Right ventricle myocardium inferior (tissue), 1 donor: ENCODE measurements at regions of chr15 and their contacts with region 1.

Region 1: GRCh38 chr15:93087825-93088199 is 1.2 kb downstream of the RGMA start:
- DNase-seq: no peak
- ATAC-seq: peak; percentile 64

Region 2: DNA sequence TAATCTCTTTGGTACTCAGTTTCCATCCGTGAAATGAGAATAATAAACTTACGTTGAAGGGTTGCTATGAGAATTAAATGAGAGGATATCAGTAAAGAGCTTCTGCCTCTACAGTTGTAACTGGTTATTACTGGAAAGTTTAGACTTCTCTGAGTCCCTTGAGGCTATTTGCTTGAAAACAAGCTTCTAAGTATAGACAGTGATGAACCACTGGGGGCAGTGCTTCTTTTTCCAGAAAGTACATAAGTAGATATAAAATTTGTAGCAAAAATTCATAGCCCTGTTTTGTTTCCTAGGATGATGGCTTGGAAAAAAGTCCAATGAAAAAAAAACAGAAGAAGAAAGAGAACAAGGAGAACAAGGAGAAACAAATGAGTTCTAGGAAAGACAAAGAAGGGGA is 85.9 kb before region 1 on chr15:
- intact Hi-C with region 1: no loop called
- DNase-seq: no peak
- ATAC-seq: no peak

Region 3: DNA sequence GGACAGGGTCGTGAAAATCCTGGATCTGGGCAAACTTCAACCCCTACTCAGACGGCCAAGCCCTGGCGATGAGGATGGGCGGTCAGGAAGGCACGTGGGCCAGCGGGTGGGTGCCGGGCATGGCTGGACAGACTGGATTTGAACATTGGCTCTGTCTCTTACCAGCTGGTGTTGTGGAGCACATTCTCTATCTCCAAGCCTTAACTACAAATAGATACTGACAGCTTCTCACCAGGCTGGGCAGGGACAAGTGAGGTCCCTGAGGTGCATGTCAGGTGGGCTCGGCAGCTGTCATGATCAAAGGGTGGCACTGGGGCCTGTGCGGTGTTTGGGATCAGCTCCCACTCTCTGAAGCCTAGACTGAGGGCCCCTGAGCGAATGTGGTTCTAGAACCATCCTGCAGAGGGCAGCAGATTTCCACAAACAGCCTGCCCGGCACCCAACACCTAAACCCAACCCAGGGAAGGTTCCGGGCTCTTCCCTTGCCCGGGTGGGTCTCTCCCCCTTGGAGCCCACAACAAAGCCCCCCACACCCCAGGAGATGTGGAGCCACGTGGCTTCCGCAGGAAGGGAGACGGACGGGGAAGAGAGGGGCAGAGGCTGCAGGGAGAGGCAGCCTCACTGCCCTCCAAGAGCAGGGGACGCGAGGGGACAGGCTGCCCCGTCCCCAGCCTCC is 57.2 kb before region 1 on chr15:
- intact Hi-C with region 1: loop called (anchors 5 kb)
- DNase-seq: no peak
- ATAC-seq: peak; percentile 70

Region 4: GRCh38 chr15:93217343-93217742 is 129.5 kb after region 1 on chr15:
- intact Hi-C with region 1: loop called (anchors 2 kb)
- DNase-seq: no peak
- ATAC-seq: peak; percentile 78

Region 5: DNA sequence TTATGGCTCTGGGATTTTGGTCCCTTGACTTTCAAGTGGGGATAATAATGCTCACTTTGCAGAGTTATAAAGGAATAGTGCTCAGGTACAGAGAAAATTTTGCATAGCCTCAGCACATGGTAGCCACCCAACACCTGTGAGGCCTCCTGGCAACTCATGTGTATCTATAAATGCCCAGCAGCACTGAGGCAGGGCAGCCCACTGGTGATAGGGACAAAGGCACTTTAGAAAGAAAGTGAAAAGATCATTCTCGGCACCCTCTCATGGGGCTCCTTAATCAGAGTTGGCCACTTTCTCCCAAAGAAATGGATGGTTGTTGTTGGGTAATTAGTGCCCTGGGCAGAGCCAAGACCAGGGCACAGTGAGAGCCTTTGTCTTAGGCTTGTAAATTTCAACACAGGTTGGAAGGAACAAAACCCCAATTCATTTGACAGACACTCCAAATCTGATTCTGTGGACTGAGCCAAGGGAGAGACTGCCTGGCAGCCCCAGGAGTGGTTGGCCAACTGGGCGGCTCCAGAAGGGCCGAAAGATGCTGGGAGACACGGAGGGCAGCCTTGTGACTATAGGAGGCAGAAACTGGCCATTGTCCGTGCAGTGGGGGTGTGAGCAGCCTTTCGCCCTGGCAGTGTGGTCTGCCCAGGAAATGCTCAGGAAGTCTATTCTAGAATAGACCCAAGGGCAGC is 214.4 kb after region 1 on chr15:
- intact Hi-C with region 1: loop called (anchors 5 kb)
- DNase-seq: no peak
- ATAC-seq: no peak

Region 6: GRCh38 chr15:93485438-93486327 is 397.9 kb after region 1 on chr15:
- intact Hi-C with region 1: loop called (anchors 5 kb)
- DNase-seq: no peak
- ATAC-seq: peak; percentile 91